Adrenal gland (tissue), 19 donors: ENCODE measurements at regions of chr21 and their contacts with region 1.

Region 1: GRCh38 chr21:15064576-15065391 is at the start of gene NRIP1:
- DNase-seq: peak; percentile 92 to 96 (median 94)
- H3K4me3 ChIP-seq: peak within 1 kb of the TSS; percentile 50 to 96 (median 91)
- H3K27ac ChIP-seq: peak within 1 kb of the TSS; percentile 92 to 99 (median 96)
- H3K4me1 ChIP-seq: peaks cover 21 to 41% of the 10 kb centered on the region in 2 donors
- H3K27me3 ChIP-seq: no peaks in the 10 kb centered on the region
- CTCF ChIP-seq: peak in 1 of 6 experiments; percentile 25
- POLR2A ChIP-seq: peak; percentile 90 to 95
- total RNA-seq, gene NRIP1: 27.4 to 75.8 (median 51.7) TPM

Region 2: DNA sequence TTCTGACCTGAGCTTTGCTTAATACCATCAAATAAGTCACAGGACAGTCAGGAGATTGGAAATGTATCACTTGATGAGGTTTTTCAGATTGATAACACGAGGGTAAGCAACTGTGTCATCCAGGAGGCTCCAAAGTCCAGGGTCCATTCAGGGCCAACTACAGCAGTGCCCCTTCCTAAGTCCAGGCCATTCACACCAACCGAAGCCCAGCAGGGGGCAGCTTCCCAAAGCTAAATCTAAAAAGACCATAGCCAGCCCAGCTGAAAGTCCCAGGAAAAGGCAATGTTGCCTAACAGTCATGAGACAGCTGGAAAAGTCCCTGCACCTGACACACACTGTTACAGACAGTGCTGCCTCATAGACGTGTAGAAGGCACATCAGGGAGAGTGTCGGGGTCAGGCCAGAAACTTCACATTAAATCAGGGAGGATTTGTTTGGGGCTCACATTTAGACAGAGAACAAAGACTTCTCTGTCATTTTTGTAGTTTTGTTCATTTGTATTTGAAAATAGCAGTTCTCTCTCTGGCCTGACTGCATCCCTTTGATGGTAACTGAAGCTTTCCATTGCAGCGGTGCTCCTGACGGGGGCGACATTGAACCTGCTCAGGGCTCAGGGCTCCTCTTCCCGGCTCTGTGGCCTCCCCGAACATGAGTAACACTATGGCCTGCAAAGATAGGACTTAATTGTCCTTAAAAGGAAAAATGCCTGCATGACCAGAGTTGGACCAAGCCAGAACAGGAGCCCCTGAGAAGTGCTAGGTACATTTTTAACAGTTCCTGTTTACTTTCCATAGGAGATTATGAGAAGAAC is 200.4 kb before region 1 on chr21:
- intact Hi-C with region 1: loop called (anchors 10 kb)
- DNase-seq: peak; percentile 74 to 92 (median 88)
- H3K4me3 ChIP-seq: no peak overlapping the region
- H3K27ac ChIP-seq: peak overlapping the region in 2 of 5 donors; percentile 48 to 73
- H3K4me1 ChIP-seq: peaks cover 6 to 28% of the 10 kb centered on the region in 2 donors
- H3K27me3 ChIP-seq: no peaks in the 10 kb centered on the region
- CTCF ChIP-seq: peak; percentile 50 to 81 (median 72)
- POLR2A ChIP-seq: no peak

Region 3: DNA sequence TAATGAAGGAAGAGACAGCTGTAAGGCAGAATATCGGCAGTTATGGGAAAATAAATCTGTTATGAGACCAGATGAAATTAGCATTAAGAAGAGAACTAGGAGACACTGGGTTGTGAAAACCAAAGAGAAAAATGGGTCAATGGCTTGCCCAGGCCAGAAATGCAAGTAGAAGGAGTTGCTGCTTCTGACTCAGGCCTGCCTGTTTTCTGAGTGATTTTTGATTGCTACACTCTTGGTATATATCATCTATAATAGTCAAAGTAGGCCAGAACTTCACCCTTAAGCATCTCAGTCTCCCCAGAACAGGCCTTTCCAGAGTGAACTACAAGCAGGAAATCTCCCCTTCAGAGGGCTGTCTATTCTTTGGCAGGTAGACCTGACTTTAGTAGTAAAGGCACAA is 106.9 kb before region 1 on chr21:
- intact Hi-C with region 1: no loop called
- DNase-seq: no peak
- H3K4me3 ChIP-seq: no peak overlapping the region
- H3K27ac ChIP-seq: no peak overlapping the region
- H3K4me1 ChIP-seq: no peaks in the 10 kb centered on the region
- H3K27me3 ChIP-seq: no peaks in the 10 kb centered on the region
- CTCF ChIP-seq: no peak
- POLR2A ChIP-seq: no peak

Region 4: GRCh38 chr21:15001857-15002606 is 62.8 kb before region 1 on chr21:
- intact Hi-C with region 1: loop called in 1 of 2 experiments (anchors 5 kb)
- DNase-seq: no peak
- H3K4me3 ChIP-seq: no peak overlapping the region
- H3K27ac ChIP-seq: peak overlapping the region in 1 of 5 donors; percentile 5
- H3K4me1 ChIP-seq: peaks cover 26 to 64% of the 10 kb centered on the region in 2 donors
- H3K27me3 ChIP-seq: no peaks in the 10 kb centered on the region
- CTCF ChIP-seq: no peak
- POLR2A ChIP-seq: no peak

Region 5: DNA sequence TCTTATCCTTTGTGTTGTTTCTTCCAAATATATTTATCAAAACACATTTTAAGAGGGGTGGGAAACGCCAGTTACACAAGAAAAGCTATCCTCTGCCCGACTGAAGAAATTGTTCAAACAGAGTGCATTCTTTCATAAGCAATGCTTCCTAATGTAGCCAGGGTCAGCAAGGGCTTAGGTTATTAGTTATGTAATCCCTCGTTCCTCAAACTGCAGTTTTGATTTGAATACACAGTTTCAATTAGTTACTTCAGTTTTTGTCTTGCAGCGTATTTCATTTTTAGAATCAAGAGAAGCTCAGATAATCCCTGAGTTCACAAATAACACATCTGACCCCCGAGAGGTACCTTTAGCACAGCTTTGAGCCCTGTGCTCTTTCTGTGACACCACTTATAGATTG is 141.7 kb after region 1 on chr21:
- intact Hi-C with region 1: loop called in 1 of 2 experiments (anchors 10 kb)
- DNase-seq: no peak
- H3K4me3 ChIP-seq: no peak overlapping the region
- H3K27ac ChIP-seq: no peak overlapping the region
- H3K4me1 ChIP-seq: peaks cover 8 to 20% of the 10 kb centered on the region in 2 donors
- H3K27me3 ChIP-seq: no peaks in the 10 kb centered on the region
- CTCF ChIP-seq: no peak
- POLR2A ChIP-seq: no peak

Region 6: DNA sequence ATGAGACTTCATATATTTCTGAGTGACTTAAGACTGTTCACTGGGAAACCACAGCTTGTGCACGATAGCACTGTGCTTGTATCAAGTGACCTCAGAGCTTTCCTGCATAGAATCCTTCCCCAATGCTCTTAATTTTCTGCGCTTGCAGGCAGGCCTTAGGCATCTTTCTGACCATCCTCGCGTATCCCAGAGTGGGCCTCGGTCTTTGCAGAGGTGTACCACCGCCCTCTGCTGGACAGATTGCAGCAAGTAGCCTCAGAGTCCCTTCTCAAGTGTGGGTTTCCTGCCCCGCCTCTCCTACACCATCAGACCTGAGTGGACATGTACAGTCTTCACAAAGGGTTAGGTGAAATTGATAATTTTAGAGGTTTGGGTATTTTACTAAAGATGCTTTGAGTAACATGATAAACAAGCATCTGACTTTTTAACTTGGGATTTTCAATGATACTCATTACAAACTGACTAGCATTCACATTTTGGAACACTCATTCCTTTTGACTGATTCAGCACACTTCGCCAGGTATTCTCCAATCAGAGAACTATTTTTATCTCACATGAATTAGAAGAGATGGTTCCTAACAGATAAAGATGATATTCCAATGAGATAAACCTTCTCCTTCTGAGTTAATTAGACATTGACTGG is 418.5 kb after region 1 on chr21:
- intact Hi-C with region 1: loop called in 1 of 2 experiments (anchors 5 kb)
- DNase-seq: peak; percentile 86 to 96 (median 93)
- H3K4me3 ChIP-seq: no peak overlapping the region
- H3K27ac ChIP-seq: no peak overlapping the region
- H3K4me1 ChIP-seq: no peaks in the 10 kb centered on the region
- H3K27me3 ChIP-seq: no peaks in the 10 kb centered on the region
- CTCF ChIP-seq: peak; percentile 89 to 95 (median 93)
- POLR2A ChIP-seq: no peak